ENCODE measurements at regions of chr5 and their contacts with region 1.

Region 1: DNA sequence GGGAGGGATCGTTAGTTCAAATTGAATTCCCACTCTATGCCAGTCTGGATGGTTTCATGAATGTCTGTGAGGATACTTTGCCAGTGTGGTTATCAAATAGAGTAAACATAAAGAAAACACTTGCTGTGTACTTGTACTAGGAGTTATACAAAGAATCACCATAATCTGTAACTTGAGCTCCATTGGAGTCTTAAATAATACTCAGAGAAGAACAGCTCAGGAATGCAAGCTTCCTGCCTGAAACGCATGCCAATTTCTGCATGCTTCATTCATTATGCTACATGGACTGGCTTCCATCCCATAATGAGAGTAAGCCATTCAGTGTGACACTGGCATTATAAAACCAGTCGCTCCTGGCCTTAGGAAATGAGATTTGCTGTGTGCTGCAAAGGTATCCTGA is 351.4 kb downstream of the SEMA5A start:
- DNase-seq: no peak

Region 2: DNA sequence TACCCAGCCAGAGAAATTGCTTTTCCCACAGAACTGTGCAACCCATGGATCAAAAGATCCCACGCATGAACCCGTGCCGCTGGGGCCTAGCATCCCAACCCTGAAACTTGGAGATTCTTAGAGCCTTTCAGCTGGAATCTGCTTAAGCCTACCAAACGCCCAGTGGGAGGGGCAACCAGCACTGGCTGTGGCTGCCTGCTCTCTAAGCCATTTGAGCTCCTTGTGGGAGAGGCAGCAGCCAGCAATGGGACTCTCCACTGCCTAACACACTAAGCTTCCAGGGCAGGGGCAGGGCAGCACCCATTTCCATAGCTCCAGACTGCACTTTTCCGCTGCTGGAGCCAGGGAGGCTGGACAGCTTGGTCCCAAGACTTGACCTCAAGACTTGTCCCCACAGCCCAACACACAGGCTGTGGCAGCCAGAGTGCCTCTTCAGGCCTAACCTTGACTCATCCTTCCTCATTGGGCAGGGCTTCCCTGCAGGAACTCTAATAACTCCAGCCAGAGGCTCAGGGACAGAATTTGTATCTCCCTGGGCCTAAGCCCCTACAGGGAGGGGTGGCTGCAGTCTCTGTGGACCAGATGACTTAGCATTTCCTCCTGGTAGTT is 888.1 kb before region 1 on chr5:
- intact Hi-C with region 1: loop called in 1 of 2 experiments (anchors 5 kb)
- DNase-seq: no peak

Region 3: DNA sequence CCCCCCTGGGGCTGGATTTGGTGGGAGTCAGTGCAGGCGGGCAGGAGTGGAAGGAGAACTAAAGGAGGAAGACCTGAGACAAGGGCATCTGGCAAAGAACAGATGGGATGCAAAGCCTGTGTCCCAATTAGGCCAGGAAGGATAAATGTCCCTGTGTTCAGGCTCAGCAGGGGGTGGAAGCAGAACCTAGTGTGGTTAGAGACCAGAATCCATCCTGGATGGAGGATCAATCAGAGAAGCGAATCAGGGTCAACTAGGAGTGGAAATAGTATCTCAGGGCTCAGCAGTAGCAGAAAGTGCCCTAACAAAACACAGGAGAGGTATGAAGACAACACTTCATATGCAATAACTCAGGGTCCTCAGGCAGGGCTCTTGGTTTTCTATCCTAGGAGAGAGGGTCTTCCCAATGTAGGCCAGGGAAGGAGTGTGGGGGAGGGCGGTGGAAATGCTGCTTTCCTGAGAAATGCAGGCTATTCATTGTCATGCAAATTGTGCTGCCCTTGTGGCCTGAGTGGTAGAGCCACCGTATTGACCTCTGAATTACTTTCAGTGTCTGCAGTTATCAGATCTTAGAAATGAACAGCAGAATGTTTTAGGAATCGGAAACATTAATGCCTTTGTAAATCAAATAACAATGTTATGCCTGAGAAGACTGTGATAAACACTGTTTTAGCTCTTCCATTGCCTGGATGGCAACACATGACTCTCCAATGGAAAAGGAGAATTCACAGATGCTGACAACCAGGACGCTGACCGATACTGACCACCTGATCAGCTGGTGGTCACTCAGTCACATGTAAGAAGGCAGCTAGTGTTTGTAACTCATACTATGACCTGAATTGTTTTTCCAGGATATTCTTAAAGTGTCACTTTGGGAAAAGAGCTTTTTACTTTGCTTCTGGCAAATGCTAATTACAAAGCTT is 27.8 kb after region 1 on chr5:
- intact Hi-C with region 1: no loop called
- DNase-seq: no peak

Measured in posterior vena cava (tissue), 2 donors.